Activated CD8-positive, alpha-beta memory T cell treated with anti-CD3 and anti-CD28 coated beads, Interleukin-2, amount 10 ng/mL, durations not matched to agents 7 days and 5 days (primary cell): ENCODE measurements at regions of chr2 and their contacts with region 1.

Region 1: GRCh38 chr2:6877402-6878304 is at the start of gene RSAD2:
- DNase-seq: peak; percentile 80
- ATAC-seq: peak; percentile 90
- H3K4me3 Mint-ChIP-seq: peak within 1 kb of the TSS; percentile 89
- H3K27ac Mint-ChIP-seq: peak within 1 kb of the TSS; percentile 98
- H3K4me1 Mint-ChIP-seq: peaks cover 55% of the 10 kb centered on the region
- H3K27me3 Mint-ChIP-seq: no peaks in the 10 kb centered on the region
- total RNA-seq, gene RSAD2: 83.0 to 183 TPM

Region 2: DNA sequence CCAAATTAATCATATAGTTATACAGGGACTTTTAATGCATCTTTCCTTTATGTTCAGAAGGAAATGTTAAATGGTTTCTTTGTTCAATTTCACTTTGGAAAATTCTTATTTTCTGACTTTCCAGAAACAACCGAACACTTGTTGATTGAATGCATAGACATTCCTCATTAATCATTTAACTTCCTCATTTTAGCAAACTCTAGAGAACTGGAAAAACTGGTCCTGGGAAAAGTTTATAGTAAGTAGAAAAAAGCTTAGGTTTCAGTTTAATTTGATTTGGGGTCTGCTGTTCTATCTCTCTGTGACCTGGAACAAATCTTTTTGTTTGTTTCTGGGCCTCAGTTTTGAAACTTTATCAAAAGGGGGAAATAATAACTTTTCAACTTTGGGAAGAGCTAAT is 332.3 kb before region 1 on chr2:
- CTCF ChIA-PET with region 1: no interaction called
- DNase-seq: no peak
- ATAC-seq: no peak
- H3K4me3 Mint-ChIP-seq: no peak overlapping the region
- H3K27ac Mint-ChIP-seq: no peak overlapping the region
- H3K4me1 Mint-ChIP-seq: no peaks in the 10 kb centered on the region
- H3K27me3 Mint-ChIP-seq: no peaks in the 10 kb centered on the region

Region 3: GRCh38 chr2:6741239-6741638 is 136.4 kb before region 1 on chr2:
- CTCF ChIA-PET with region 1: no interaction called
- DNase-seq: no peak
- ATAC-seq: no peak
- H3K4me3 Mint-ChIP-seq: no peak overlapping the region
- H3K27ac Mint-ChIP-seq: no peak overlapping the region
- H3K4me1 Mint-ChIP-seq: no peaks in the 10 kb centered on the region
- H3K27me3 Mint-ChIP-seq: peaks cover 10% of the 10 kb centered on the region

Region 4: DNA sequence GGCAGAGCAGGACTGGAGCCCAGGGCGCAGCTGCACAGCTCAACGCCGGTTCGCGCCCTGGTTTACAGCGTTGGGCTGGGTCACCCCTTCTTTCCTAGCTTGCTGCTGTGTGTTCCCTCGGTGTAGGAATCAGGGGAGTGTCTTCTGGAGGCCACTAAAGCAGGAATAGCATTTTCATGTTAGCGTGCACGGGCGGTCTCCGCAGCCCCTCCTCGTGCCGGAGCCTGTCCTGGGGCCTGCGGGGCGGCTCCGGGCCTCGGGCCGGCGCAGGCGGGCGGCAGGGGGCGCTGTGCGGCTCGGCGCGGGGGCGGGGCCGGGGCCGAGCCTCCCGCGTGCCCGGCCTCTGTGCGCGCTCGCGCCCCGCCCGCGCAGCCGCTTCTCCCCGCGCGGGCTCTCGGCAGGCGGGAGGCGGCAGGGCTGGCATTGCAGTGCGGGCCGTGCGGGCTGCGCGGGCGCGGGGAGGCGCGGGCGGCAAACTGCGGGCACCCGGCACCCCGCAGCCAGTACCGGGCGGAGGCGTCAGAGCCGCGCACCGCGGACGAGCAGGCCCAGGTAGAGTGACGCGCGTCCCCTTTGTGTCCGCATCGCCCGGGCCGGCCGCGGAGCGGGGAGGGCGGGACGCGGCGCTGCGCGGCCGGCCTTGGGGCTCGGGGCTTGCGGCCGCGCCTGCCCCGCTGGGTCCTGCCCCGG is 39.6 kb after region 1 on chr2 and contains the start of gene RNF144A:
- CTCF ChIA-PET with region 1: interaction called, 14 read pairs
- DNase-seq: peak; percentile 68
- ATAC-seq: peak; percentile 88
- H3K4me3 Mint-ChIP-seq: peak within 1 kb of the TSS; percentile 66
- H3K27ac Mint-ChIP-seq: peak within 1 kb of the TSS; percentile 64
- H3K4me1 Mint-ChIP-seq: peaks cover 46% of the 10 kb centered on the region
- H3K27me3 Mint-ChIP-seq: peaks cover 11% of the 10 kb centered on the region
- total RNA-seq, gene RNF144A: 20.0 to 35.5 TPM